Gastrocnemius medialis (tissue), 4 donors: ENCODE measurements at regions of chr16 and their contacts with region 1.

Region 1: GRCh38 chr16:72989579-72990551 is 58.1 kb downstream of the ZFHX3 start:
- DNase-seq: peak; percentile 97 to 99
- ATAC-seq: peak; percentile 61 to 66
- H3K4me3 ChIP-seq: peak overlapping the region; percentile 23 to 41 (median 36)
- H3K27ac ChIP-seq: peak overlapping the region; percentile 89 to 99 (median 96)
- H3K4me1 ChIP-seq: peaks cover 92 to 95% of the 10 kb centered on the region in 2 donors
- H3K27me3 ChIP-seq: no peaks in the 10 kb centered on the region
- CTCF ChIP-seq: no peak
- POLR2A ChIP-seq: peak; percentile 34 to 64

Region 2: DNA sequence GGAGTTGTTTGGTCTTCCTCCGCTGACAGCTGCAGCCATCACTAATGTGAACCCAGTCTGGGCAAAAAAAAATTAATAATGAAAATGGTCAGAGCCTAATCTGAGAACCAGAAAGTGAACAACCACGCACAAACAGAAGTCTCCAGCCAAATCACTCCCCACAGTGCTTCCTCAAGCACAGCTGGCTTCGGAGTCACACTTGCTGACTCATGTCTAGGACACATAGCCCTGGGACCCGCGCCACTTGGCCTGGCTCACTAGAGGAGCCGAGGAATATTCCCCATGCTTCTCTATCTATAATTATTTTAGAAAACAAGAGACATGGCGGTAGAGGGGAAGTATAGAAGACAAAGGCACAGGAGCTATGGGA is 51.1 kb before region 1 on chr16:
- in situ Hi-C with region 1: no loop called
- intact Hi-C with region 1: loop called (anchors 1 kb)
- DNase-seq: peak; percentile 90 to 93
- ATAC-seq: peak; percentile 87
- H3K4me3 ChIP-seq: peak overlapping the region; percentile 31 to 47 (median 36)
- H3K27ac ChIP-seq: peak overlapping the region; percentile 85 to 95 (median 88)
- H3K4me1 ChIP-seq: peaks cover 59 to 64% of the 10 kb centered on the region in 2 donors
- H3K27me3 ChIP-seq: no peaks in the 10 kb centered on the region
- CTCF ChIP-seq: no peak
- POLR2A ChIP-seq: peak in 1 of 2 donors; percentile 34

Region 3: GRCh38 chr16:73006026-73006425 is 16.2 kb after region 1 on chr16:
- in situ Hi-C with region 1: no loop called
- intact Hi-C with region 1: loop called (anchors 2 kb)
- DNase-seq: no peak
- ATAC-seq: no peak
- H3K4me3 ChIP-seq: no peak overlapping the region
- H3K27ac ChIP-seq: no peak overlapping the region
- H3K4me1 ChIP-seq: peaks cover 51 to 58% of the 10 kb centered on the region in 2 donors
- H3K27me3 ChIP-seq: no peaks in the 10 kb centered on the region
- CTCF ChIP-seq: no peak
- POLR2A ChIP-seq: no peak

Region 4: DNA sequence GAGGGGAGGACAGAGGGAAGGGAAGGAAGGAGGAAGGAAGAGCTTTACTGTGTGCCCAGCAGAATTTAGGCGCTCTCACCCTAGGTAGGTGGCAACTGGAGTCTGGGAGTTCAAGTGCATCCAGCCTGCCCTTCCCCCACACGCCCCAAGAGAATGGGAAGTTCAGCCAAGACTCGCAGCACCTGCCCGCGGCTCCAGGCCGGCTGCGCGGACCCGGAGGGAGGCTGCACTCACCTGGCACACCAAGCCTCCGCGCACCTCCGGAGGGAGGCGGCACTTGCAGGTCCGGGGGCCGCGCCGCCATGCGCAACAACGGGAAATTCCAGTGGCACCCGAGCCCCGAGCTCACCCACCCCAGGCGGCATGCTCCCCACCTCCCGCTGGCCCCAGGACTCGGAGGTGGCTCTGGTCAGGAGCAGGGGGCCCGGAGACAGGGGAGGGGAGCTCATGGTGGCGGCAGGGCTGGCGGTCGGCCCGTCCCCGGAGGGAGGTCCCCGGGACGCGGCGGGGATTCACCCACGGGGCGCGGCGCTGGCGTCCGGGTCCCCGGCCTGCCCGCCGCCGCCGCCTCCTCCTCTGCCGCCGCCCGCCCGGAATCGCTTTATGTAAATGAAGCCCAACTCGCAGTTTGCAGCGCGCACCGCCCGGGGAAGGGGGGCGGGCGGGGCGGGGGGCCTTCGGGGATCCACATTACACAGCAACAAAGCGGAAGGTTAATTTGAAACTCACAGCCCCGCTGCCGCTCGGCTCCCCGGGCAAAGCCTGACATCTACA is 57.8 kb after region 1 on chr16 and contains the start of gene ZFHX3:
- in situ Hi-C with region 1: loop called in 2 of 4 experiments (anchors 5 kb)
- intact Hi-C with region 1: loop called (anchors 1 kb)
- DNase-seq: peak; percentile 81 to 90
- ATAC-seq: peak; percentile 54 to 56
- H3K4me3 ChIP-seq: peak within 1 kb of the TSS; percentile 85 to 97 (median 89)
- H3K27ac ChIP-seq: peak within 1 kb of the TSS; percentile 95 to 99 (median 99)
- H3K4me1 ChIP-seq: peaks cover 86 to 89% of the 10 kb centered on the region in 2 donors
- H3K27me3 ChIP-seq: no peaks in the 10 kb centered on the region
- CTCF ChIP-seq: peak in 2 of 5 experiments; percentile 2 to 33
- POLR2A ChIP-seq: peak; percentile 78 to 91
- total RNA-seq, gene ZFHX3: 14.0 to 28.5 (median 27.3) TPM

Region 5: DNA sequence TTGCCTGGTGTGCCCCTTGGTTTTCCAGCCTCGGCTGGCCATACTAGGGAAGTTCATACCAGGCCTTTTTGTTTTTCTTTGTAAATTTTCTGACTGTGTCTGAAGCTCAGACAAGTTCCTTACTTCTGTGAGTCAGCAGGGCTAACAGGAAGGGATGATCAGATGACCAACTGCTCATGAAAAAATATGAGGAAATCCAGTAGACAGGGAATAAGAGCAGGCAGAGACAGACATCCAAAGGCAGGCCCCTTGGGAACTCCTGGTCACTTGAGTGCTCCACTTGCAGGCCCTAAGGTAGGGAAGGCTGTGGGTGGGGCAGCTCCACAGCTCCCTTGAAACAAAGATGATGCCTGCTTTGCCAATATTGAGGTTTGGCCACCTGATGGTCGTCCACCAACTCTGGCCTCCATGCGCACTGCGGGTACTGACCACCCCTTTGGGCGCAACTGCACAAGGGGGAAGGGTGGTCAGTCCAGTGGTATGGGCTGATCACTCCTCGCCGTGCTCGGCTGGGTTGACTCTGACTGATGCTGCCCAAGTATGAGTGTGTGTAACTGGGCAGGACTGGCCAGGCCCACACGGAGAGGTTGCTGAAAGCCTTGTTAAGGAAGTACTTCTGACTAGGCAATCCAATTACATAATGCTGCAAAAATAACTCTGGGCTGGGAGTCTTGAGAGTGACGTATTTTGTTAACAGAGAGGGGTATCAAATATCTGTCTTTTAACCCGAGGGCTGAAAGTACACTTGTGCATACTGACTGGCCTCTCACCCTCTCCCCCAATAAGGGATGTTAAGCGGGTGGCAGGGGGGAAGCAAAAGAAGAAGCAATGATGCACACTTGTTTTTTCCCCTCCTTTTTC is 78.9 kb after region 1 on chr16:
- in situ Hi-C with region 1: no loop called
- intact Hi-C with region 1: loop called (anchors 2 kb)
- DNase-seq: peak; percentile 79 to 93
- ATAC-seq: peak; percentile 79
- H3K4me3 ChIP-seq: peak overlapping the region in 2 of 4 donors; percentile 13 to 59
- H3K27ac ChIP-seq: peak overlapping the region; percentile 89 to 99 (median 95)
- H3K4me1 ChIP-seq: peaks cover 51 to 60% of the 10 kb centered on the region in 2 donors
- H3K27me3 ChIP-seq: peaks cover 0 to 15% (median 5%) of the 10 kb centered on the region in 3 donors
- CTCF ChIP-seq: no peak
- POLR2A ChIP-seq: peak; percentile 62 to 77